Activated naive CD8-positive, alpha-beta T cell treated with anti-CD3 and anti-CD28 coated beads, Interleukin-2, amount 10 ng/mL, durations not matched to agents 7 days and 5 days (primary cell): ENCODE measurements at regions of chr9 and their contacts with region 1.

Region 1: GRCh38 chr9:37784616-37785483 is at the start of gene EXOSC3:
- DNase-seq: peak; percentile 88
- ATAC-seq: peak; percentile 92
- H3K4me3 Mint-ChIP-seq: peak within 1 kb of the TSS; percentile 98
- H3K27ac Mint-ChIP-seq: peak within 1 kb of the TSS; percentile 97
- H3K4me1 Mint-ChIP-seq: peaks cover 26% of the 10 kb centered on the region
- H3K27me3 Mint-ChIP-seq: no peaks in the 10 kb centered on the region
- total RNA-seq, gene EXOSC3: 67.8 to 72.1 TPM

Region 2: GRCh38 chr9:37800631-37801286 is 15.9 kb after region 1 on chr9 and contains the start of gene DCAF10:
- POLR2A ChIA-PET with region 1: interaction called, 28 read pairs
- DNase-seq: peak; percentile 97
- ATAC-seq: peak; percentile 71
- H3K4me3 Mint-ChIP-seq: peak within 1 kb of the TSS; percentile 91
- H3K27ac Mint-ChIP-seq: peak within 1 kb of the TSS; percentile 72
- H3K4me1 Mint-ChIP-seq: peaks cover 35% of the 10 kb centered on the region
- H3K27me3 Mint-ChIP-seq: no peaks in the 10 kb centered on the region
- total RNA-seq, gene DCAF10: 19.5 to 19.8 TPM